Activated naive CD4-positive, alpha-beta T cell treated with anti-CD3 and anti-CD28 coated beads for 36 hours (primary cell): ENCODE measurements at regions of chr16 and their contacts with region 1.

Region 1: GRCh38 chr16:29805378-29806098 is 791 bp upstream of the MAZ start:
- DNase-seq: peak; percentile 99
- H3K4me3 Mint-ChIP-seq: peak overlapping the region; percentile 98
- H3K27ac Mint-ChIP-seq: peak overlapping the region; percentile 100
- H3K4me1 Mint-ChIP-seq: peaks cover 37% of the 10 kb centered on the region
- H3K27me3 Mint-ChIP-seq: no peaks in the 10 kb centered on the region

Region 2: DNA sequence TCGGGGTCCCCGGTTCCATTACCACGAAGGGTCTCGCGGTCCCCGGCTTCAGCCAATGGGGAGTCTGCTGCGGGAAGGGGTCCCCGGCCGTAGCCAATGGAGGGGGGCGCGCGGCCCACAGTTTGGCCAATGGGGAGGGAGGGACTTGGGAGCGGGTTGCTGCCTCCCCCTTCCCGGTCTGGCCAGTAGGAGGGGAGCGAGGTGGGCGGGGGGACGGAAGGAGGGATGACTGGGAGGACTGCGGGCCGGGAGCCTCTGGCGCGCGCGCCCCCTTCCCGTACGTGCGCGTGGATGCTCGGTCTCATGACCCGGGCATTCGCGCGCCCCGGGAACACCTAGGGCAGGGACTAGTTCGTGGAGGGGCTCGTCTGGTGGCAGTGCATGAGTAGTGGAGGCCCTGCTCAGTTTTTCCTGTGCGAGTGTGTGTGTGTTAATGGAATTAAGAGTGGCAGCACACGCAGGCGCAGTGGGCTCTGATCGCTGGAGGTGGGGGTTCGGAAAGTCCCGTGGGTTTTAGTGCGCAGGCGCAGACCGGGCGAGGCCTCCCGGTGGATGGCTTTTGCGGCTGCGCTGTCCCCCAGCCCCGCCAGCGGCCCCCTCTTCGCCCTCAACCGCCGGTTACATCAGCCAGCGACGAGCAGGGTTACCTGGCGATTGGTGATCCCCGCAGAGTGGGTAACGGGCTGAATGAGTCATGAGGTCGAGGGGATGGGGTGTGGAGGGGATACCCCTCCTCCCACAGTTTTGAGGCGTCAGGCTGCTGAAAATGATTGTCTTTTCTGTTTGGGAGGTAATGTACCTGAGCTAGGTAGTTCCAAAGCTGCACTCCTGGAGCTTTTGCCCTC is 981.4 kb before region 1 on chr16:
- CTCF ChIA-PET with region 1: no interaction called
- intact Hi-C with region 1: loop called (anchors 5 kb)
- DNase-seq: peak; percentile 99
- H3K4me3 Mint-ChIP-seq: peak overlapping the region; percentile 92
- H3K27ac Mint-ChIP-seq: peak overlapping the region; percentile 98
- H3K4me1 Mint-ChIP-seq: peaks cover 50% of the 10 kb centered on the region
- H3K27me3 Mint-ChIP-seq: no peaks in the 10 kb centered on the region

Region 3: GRCh38 chr16:29745853-29746345 is 59.6 kb before region 1 on chr16 and contains the start of gene C16orf54:
- CTCF ChIA-PET with region 1: no interaction called
- intact Hi-C with region 1: loop called (anchors 5 kb)
- DNase-seq: peak; percentile 96
- H3K4me3 Mint-ChIP-seq: peak within 1 kb of the TSS; percentile 97
- H3K27ac Mint-ChIP-seq: peak within 1 kb of the TSS; percentile 97
- H3K4me1 Mint-ChIP-seq: peaks cover 65% of the 10 kb centered on the region
- H3K27me3 Mint-ChIP-seq: no peaks in the 10 kb centered on the region
- total RNA-seq, gene C16orf54: 11.4 to 12.1 TPM

Region 4: DNA sequence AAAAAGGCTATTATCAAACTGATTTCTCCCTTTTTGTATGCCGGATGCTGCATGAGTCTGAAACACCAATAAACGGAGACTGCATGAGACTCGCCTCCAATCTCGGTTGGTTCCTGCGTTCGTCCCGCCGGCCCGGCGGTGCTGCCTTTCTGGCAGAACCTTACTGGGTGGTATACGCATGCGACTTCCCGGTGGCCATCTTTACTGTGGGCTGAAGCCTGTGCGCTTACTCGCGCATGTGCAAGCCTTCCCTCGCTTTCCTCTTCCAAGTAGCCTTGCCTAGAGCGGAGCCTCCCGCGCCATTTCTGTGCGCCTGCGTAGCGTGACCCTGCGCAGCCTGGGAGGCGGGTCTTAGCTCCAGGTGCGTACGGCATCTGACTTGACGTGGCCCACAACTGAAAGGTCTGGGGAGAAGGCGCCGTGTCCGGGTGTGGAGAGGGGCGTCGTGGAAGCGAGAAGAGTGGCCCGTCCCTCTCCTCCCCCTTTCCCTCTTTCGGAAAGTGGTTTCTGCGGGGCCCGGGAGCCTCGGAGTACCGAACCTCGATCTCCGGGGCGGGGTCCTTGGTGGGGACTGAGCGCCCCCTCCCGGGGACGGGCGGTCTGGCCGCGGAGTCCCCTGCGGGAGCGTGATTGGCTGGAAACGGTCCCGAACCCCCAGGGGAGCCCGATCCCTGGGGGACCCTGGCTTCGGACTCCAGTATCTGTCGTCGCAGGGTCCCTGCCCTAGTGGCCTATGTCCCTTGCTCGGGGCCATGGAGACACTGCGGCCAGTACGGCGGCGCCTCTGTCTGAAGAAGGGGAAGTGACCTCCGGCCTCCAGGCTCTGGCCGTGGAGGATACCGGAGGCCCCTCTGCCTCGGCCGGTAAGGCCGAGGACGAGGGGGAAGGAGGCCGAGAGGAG is 10.5 kb after region 1 on chr16 and contains the start of gene PAGR1:
- CTCF ChIA-PET with region 1: interaction called, 18 read pairs
- intact Hi-C with region 1: loop called (anchors 1 kb)
- DNase-seq: peak; percentile 99
- H3K4me3 Mint-ChIP-seq: peak within 1 kb of the TSS; percentile 93
- H3K27ac Mint-ChIP-seq: peak within 1 kb of the TSS; percentile 96
- H3K4me1 Mint-ChIP-seq: peaks cover 55% of the 10 kb centered on the region
- H3K27me3 Mint-ChIP-seq: no peaks in the 10 kb centered on the region
- total RNA-seq, gene PAGR1: 16.9 to 19.3 TPM

Region 5: GRCh38 chr16:29848420-29849297 is 43.1 kb after region 1 on chr16:
- CTCF ChIA-PET with region 1: interaction called, 24 read pairs
- intact Hi-C with region 1: loop called (anchors 1 kb)
- DNase-seq: peak; percentile 91
- H3K4me3 Mint-ChIP-seq: no peak overlapping the region
- H3K27ac Mint-ChIP-seq: no peak overlapping the region
- H3K4me1 Mint-ChIP-seq: peaks cover 5% of the 10 kb centered on the region
- H3K27me3 Mint-ChIP-seq: no peaks in the 10 kb centered on the region

Region 6: GRCh38 chr16:29973384-29974246 is 168.1 kb after region 1 on chr16 and contains the start of gene TAOK2:
- CTCF ChIA-PET with region 1: no interaction called
- intact Hi-C with region 1: loop called (anchors 1 kb)
- DNase-seq: peak; percentile 95
- H3K4me3 Mint-ChIP-seq: peak within 1 kb of the TSS; percentile 97
- H3K27ac Mint-ChIP-seq: peak within 1 kb of the TSS; percentile 82
- H3K4me1 Mint-ChIP-seq: peaks cover 28% of the 10 kb centered on the region
- H3K27me3 Mint-ChIP-seq: no peaks in the 10 kb centered on the region
- total RNA-seq, gene TAOK2: 20.9 to 21.6 TPM

Region 7: GRCh38 chr16:30024451-30024850 is 218.9 kb after region 1 on chr16:
- CTCF ChIA-PET with region 1: no interaction called
- intact Hi-C with region 1: loop called (anchors 5 kb)
- DNase-seq: no peak
- H3K4me3 Mint-ChIP-seq: no peak overlapping the region
- H3K27ac Mint-ChIP-seq: no peak overlapping the region
- H3K4me1 Mint-ChIP-seq: peaks cover 5% of the 10 kb centered on the region
- H3K27me3 Mint-ChIP-seq: peaks cover 23% of the 10 kb centered on the region